PC-9 (cell line): ENCODE measurements at regions of chr4 and their contacts with region 1.

Region 1: GRCh38 chr4:183068502-183068901 is 30.6 kb upstream of the WWC2 start:
- DNase-seq: no peak
- H3K4me3 ChIP-seq: no peak overlapping the region
- H3K27ac ChIP-seq: no peak overlapping the region
- H3K4me1 ChIP-seq: no peaks in the 10 kb centered on the region
- H3K27me3 ChIP-seq: no peaks in the 10 kb centered on the region
- CTCF ChIP-seq: no peak

Region 2: DNA sequence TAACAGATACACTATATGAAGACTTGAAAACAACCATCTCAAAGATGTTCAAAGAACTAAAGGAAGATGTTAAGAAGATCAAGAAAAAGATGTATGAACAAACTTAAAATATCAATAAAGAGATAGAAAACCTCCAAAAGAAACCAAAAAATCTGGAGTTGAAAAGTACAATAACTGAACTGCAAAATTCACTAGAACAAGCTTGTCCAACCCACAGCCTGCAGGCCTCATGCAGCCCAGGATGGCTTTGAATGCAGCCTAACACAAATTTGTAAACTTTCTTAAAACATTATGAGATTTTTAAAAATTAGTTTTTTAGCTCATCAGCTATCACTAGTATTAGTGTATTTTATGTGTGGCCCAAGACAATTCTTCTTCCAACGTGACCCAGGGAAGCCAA is 74.3 kb before region 1 on chr4:
- CTCF ChIA-PET with region 1: interaction called, 12 read pairs
- POLR2A ChIA-PET with region 1: no interaction called
- intact Hi-C with region 1: no loop called
- DNase-seq: no peak
- H3K4me3 ChIP-seq: no peak overlapping the region
- H3K27ac ChIP-seq: no peak overlapping the region
- H3K4me1 ChIP-seq: no peaks in the 10 kb centered on the region
- H3K27me3 ChIP-seq: no peaks in the 10 kb centered on the region
- CTCF ChIP-seq: no peak